Stomach (tissue), 19 donors: ENCODE measurements at regions of chr2 and their contacts with region 1.

Region 1: GRCh38 chr2:143259368-143259958 is 130.2 kb downstream of the ARHGAP15 start:
- DNase-seq: peak; percentile 65 to 88
- H3K4me3 ChIP-seq: no peak overlapping the region
- H3K27ac ChIP-seq: peak overlapping the region in 1 of 5 donors; percentile 41
- H3K4me1 ChIP-seq: peaks cover 0 to 13% (median 0%) of the 10 kb centered on the region in 4 donors
- H3K27me3 ChIP-seq: no peaks in the 10 kb centered on the region
- CTCF ChIP-seq: peak in 5 of 7 experiments; percentile 45 to 67 (median 58)
- EP300 ChIP-seq: no peak
- POLR2A ChIP-seq: no peak

Region 2: DNA sequence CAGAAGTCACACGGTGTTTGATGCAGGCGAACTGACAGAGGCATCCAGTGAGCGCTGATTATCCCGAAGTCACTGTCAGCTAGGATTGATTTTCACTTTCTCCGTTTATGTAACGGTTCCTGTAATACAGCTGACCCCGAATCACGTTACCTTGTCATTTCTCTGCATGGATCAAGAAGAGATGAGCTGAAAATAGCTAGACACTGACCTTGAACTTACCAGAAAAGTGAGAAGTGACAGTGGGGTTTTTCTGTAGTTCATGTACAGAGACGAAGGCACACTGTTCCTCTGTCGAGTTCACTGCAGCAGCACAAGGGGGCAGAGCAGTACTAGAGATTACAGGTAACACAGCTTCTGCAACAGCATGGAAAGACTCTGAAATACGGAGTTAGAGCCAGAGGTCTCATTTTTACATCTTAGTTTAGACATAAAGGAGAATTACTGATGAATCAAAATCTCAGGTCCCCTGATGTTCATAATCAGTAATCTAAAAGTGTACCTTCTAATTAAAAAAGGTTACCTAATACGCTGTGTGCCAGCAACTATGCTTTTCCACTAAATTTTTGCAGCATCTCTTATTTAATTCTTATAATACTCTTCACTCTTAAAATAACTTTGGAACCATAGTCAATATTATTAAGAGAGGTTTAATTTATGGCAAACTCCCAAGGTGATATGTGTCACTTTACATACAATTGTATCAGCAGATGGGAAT is 97.2 kb before region 1 on chr2:
- intact Hi-C with region 1: loop called (anchors 10 kb)
- DNase-seq: peak; percentile 29 to 85
- H3K4me3 ChIP-seq: no peak overlapping the region
- H3K27ac ChIP-seq: no peak overlapping the region
- H3K4me1 ChIP-seq: peaks cover 0 to 38% (median 8%) of the 10 kb centered on the region in 4 donors
- H3K27me3 ChIP-seq: peaks cover 0 to 5% (median 0%) of the 10 kb centered on the region in 3 donors
- CTCF ChIP-seq: peak in 5 of 7 experiments; percentile 27 to 49 (median 47)
- EP300 ChIP-seq: no peak
- POLR2A ChIP-seq: no peak